GM23248 (cell line): ENCODE measurements at regions of chr15 and their contacts with region 1.

Region 1: GRCh38 chr15:57861036-57861638 is 154.6 kb downstream of the POLR2M start:
- DNase-seq: peak; percentile 67
- H3K4me3 ChIP-seq: no peak overlapping the region
- H3K27ac ChIP-seq: no peak overlapping the region
- H3K4me1 ChIP-seq: peaks cover 9% of the 10 kb centered on the region
- H3K27me3 ChIP-seq: no peaks in the 10 kb centered on the region

Region 2: GRCh38 chr15:57751177-57751800 is 109.8 kb before region 1 on chr15:
- in situ Hi-C with region 1: loop called (anchors 5 kb)
- DNase-seq: peak; percentile 70
- H3K4me3 ChIP-seq: no peak overlapping the region
- H3K27ac ChIP-seq: no peak overlapping the region
- H3K4me1 ChIP-seq: no peaks in the 10 kb centered on the region
- H3K27me3 ChIP-seq: no peaks in the 10 kb centered on the region

Region 3: GRCh38 chr15:57769266-57769665 is 91.9 kb before region 1 on chr15:
- in situ Hi-C with region 1: no loop called
- DNase-seq: peak; percentile 93
- H3K4me3 ChIP-seq: no peak overlapping the region
- H3K27ac ChIP-seq: peak overlapping the region; percentile 43
- H3K4me1 ChIP-seq: peaks cover 11% of the 10 kb centered on the region
- H3K27me3 ChIP-seq: no peaks in the 10 kb centered on the region

Region 4: GRCh38 chr15:58146749-58147148 is 285.6 kb after region 1 on chr15:
- in situ Hi-C with region 1: no loop called
- DNase-seq: peak; percentile 36
- H3K4me3 ChIP-seq: no peak overlapping the region
- H3K27ac ChIP-seq: no peak overlapping the region
- H3K4me1 ChIP-seq: no peaks in the 10 kb centered on the region
- H3K27me3 ChIP-seq: no peaks in the 10 kb centered on the region